Activated naive CD8-positive, alpha-beta T cell treated with anti-CD3 and anti-CD28 coated beads, Interleukin-2, amount 10 ng/mL, durations not matched to agents 7 days and 5 days (primary cell): ENCODE measurements at regions of chr12 and their contacts with region 1.

Region 1: GRCh38 chr12:43805860-43806736 is at the start of gene TWF1:
- DNase-seq: peak; percentile 97
- ATAC-seq: peak; percentile 94
- H3K4me3 Mint-ChIP-seq: peak within 1 kb of the TSS; percentile 100
- H3K27ac Mint-ChIP-seq: peak within 1 kb of the TSS; percentile 100
- H3K4me1 Mint-ChIP-seq: peaks cover 23% of the 10 kb centered on the region
- H3K27me3 Mint-ChIP-seq: peaks cover 1% of the 10 kb centered on the region
- total RNA-seq, gene TWF1: 27.2 to 29.0 TPM

Region 2: DNA sequence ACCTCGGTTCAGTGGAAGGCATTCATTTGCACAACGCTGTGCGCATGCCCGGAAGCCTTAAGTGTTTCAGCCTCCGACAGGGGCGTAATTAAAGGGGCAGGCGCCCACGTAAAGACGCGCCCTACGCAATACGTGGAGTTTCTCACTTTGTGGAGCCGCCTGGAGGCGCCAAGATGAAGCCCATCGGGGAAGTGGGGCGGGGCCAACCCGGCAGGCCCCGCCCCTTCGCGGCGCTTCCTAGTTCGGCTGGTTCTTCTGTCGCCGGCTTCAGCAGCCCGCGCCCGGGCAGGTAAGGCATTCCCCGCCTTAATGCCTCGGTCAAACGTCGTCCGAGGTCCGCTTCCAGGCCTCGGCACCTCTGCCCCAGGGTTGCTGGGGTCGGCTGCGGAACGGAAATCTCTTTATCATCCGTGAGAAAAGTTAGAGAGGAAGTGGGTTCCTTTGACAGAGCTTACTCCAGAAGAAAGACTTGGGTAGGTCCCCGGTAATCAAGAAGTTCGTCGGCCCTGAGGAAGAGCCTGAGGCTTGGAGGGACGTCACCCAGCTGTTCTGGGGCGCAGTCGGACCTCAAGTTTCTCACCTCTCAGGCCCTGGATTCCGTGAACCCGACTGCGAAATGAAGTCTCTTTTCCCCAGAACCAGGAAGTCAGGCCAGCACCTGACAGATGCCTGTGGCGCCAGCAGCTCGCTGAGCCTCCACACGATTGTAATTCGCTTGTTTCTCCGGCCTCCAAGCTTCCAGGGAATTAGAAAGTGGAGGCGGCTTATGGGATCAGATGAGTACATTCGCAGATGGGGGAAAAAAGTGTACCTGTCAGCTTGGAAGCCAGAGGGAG is 47.2 kb before region 1 on chr12 and contains the starts of genes IRAK4 and PUS7L:
- POLR2A ChIA-PET with region 1: interaction called, 51 read pairs
- DNase-seq: peak; percentile 87
- ATAC-seq: peak; percentile 94
- H3K4me3 Mint-ChIP-seq: peak within 1 kb of the TSS; percentile 98
- H3K27ac Mint-ChIP-seq: peak within 1 kb of the TSS; percentile 99
- H3K4me1 Mint-ChIP-seq: peaks cover 53% of the 10 kb centered on the region
- H3K27me3 Mint-ChIP-seq: no peaks in the 10 kb centered on the region
- total RNA-seq, gene IRAK4: 43.4 to 46.0 TPM
- total RNA-seq, gene PUS7L: 21.7 to 26.3 TPM

Region 3: GRCh38 chr12:43816168-43816567 is 10.1 kb after region 1 on chr12:
- POLR2A ChIA-PET with region 1: interaction called, 16 read pairs
- DNase-seq: no peak
- ATAC-seq: no peak
- H3K4me3 Mint-ChIP-seq: no peak overlapping the region
- H3K27ac Mint-ChIP-seq: no peak overlapping the region
- H3K4me1 Mint-ChIP-seq: peaks cover 1% of the 10 kb centered on the region
- H3K27me3 Mint-ChIP-seq: peaks cover 4% of the 10 kb centered on the region

Region 4: GRCh38 chr12:43835656-43836474 is 29.8 kb after region 1 on chr12 and contains the start of gene TMEM117:
- POLR2A ChIA-PET with region 1: interaction called, 14 read pairs
- DNase-seq: peak; percentile 72
- ATAC-seq: peak; percentile 71
- H3K4me3 Mint-ChIP-seq: peak within 1 kb of the TSS; percentile 79
- H3K27ac Mint-ChIP-seq: peak within 1 kb of the TSS; percentile 54
- H3K4me1 Mint-ChIP-seq: peaks cover 29% of the 10 kb centered on the region
- H3K27me3 Mint-ChIP-seq: peaks cover 49% of the 10 kb centered on the region
- total RNA-seq, gene TMEM117: 0.58 to 1.0 TPM

Region 5: DNA sequence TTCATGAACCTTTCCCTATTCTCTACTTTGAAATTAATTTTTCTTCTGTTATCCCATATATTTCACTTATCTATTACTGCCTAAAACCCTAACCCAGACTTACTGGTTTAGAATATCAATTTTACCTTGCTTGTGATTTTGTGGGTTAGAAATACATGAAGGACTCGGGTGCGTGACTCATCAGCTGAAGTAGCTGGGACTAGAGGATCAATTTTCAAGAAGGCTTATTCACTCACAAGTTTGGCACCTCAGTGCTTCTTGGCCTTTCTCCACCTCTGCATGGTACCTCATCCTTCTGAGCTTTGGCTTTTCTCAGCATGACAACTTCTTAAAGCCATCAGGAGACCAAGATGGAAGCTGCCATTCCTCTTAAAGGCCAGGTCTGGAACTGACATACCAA is 87.6 kb after region 1 on chr12:
- POLR2A ChIA-PET with region 1: no interaction called
- DNase-seq: no peak
- ATAC-seq: no peak
- H3K4me3 Mint-ChIP-seq: no peak overlapping the region
- H3K27ac Mint-ChIP-seq: no peak overlapping the region
- H3K4me1 Mint-ChIP-seq: peaks cover 1% of the 10 kb centered on the region
- H3K27me3 Mint-ChIP-seq: no peaks in the 10 kb centered on the region